Activated CD4-positive, alpha-beta T cell treated with anti-CD3 and anti-CD28 coated beads, Interleukin-2, amount 10 ng/mL, durations not matched to agents 24 days and 14 days (primary cell): ENCODE measurements at regions of chr20 and their contacts with region 1.

Region 1: DNA sequence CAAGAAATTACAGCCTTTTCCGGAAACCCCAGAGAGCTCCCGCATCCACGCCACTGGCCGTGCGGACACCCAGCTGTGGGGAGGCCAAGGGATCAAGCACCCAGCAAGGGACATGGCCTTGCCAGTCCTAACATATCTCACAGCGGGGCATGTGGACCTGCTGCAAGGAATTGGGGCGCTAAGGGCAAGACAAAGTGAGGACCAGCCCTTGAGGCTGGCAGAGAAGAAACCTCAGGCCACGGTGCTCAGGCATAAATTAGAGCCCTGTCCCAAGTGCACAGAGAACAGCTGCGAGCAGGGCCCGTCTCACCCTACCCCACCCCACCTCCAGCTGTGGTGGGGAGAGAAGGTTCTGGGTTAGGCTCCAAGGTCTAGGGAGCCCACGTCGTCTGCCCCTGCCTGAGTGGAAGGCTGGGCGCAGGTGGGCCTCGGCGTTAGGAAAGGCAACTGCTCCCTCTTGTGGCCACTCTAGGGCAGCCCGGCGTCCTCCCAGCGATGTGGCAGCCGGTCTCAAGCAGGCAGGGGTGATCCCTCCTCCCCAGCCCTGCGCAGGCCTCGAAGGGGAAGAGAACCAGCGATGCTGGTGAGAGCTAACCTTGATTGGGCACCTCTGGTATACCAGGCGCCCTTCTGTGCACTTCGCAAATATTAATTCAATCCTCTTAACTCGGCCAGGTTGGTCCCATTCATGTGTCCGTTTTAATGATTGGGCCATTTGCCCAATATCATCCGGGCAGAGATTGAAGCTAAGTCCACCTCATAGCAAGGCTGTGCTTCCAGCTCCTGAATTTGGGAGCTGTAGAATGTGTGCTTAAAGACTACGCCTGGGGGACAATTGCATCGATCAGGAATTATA is 235.8 kb downstream of the NFATC2 start:
- DNase-seq: peak; percentile 91
- H3K4me3 Mint-ChIP-seq: no peak overlapping the region
- H3K27ac Mint-ChIP-seq: no peak overlapping the region
- H3K4me1 Mint-ChIP-seq: peaks cover 2% of the 10 kb centered on the region
- H3K27me3 Mint-ChIP-seq: peaks cover 15% of the 10 kb centered on the region

Region 2: DNA sequence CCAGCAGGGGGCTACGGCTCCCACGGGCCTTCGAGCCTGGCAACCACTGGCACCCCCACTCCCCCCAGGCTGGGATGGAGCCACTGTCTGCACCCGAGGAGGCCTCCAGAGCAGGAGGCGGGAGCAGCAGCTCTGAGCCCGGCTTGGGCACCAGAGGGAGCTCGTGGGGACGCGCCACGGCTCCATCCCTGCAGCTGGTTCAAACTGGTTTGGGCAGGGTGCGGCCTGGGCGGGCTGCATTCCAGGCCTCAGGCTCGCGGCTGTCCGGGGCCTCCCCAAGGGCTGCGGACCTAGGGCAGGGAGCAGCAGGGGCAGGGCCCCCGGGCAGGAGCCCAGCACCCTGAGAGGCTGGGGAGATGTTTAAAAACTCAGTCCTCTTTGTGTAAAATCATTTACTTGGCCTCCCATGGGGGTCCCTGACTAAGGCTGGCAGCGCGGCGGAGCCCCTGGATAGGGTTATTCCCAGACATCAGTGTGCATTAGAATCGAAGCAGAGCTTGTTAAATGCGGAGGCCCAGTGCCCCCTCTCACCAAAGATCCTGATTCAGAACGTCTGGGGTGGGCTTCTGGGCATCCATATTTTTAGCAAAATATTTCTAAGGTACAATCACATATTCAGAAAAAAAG is 516.0 kb before region 1 on chr20:
- intact Hi-C with region 1: loop called (anchors 2 kb)
- DNase-seq: peak; percentile 93
- H3K4me3 Mint-ChIP-seq: no peak overlapping the region
- H3K27ac Mint-ChIP-seq: peak overlapping the region; percentile 69
- H3K4me1 Mint-ChIP-seq: peaks cover 11% of the 10 kb centered on the region
- H3K27me3 Mint-ChIP-seq: peaks cover 4% of the 10 kb centered on the region

Region 3: GRCh38 chr20:50987592-50988210 is 319.0 kb before region 1 on chr20:
- intact Hi-C with region 1: loop called (anchors 1 kb)
- DNase-seq: peak; percentile 92
- H3K4me3 Mint-ChIP-seq: no peak overlapping the region
- H3K27ac Mint-ChIP-seq: no peak overlapping the region
- H3K4me1 Mint-ChIP-seq: peaks cover 3% of the 10 kb centered on the region
- H3K27me3 Mint-ChIP-seq: peaks cover 26% of the 10 kb centered on the region

Region 4: GRCh38 chr20:51220293-51220706 is 86.4 kb before region 1 on chr20:
- intact Hi-C with region 1: loop called (anchors 2 kb)
- DNase-seq: peak; percentile 86
- H3K4me3 Mint-ChIP-seq: no peak overlapping the region
- H3K27ac Mint-ChIP-seq: no peak overlapping the region
- H3K4me1 Mint-ChIP-seq: peaks cover 5% of the 10 kb centered on the region
- H3K27me3 Mint-ChIP-seq: peaks cover 30% of the 10 kb centered on the region

Region 5: DNA sequence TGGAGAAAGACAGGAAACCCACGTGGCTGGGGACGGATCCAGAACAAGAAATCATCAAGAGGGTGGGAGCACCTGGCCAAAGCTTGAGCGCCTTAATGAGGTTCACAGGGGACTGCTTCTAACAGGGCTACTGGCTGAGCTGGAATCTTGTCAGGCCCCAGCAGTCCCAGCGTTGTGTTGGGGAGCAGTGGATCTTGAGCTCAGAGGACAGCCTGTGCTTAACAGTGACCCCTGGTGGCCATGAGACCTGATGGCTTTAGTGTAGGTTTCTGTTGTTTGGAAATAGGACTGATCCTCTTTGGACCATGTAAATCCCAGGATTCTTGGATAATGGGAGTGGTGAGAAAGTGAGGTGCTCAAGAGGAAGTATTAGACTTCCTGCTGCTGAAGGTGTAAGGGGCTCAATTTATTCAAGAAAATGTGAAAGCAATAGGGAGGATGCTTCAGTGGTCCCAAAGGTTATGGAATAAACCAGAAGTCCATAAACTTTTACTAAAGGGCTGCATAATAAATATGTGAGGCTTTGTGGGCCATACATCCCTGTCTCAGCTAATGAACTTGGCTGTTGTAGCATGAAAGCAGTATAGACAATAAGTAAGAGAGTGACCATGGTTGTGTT is 19.6 kb after region 1 on chr20:
- intact Hi-C with region 1: no loop called
- DNase-seq: no peak
- H3K4me3 Mint-ChIP-seq: no peak overlapping the region
- H3K27ac Mint-ChIP-seq: no peak overlapping the region
- H3K4me1 Mint-ChIP-seq: no peaks in the 10 kb centered on the region
- H3K27me3 Mint-ChIP-seq: no peaks in the 10 kb centered on the region

Region 6: GRCh38 chr20:51360451-51361221 is 53.9 kb after region 1 on chr20:
- intact Hi-C with region 1: no loop called
- DNase-seq: no peak
- H3K4me3 Mint-ChIP-seq: no peak overlapping the region
- H3K27ac Mint-ChIP-seq: no peak overlapping the region
- H3K4me1 Mint-ChIP-seq: peaks cover 4% of the 10 kb centered on the region
- H3K27me3 Mint-ChIP-seq: peaks cover 10% of the 10 kb centered on the region

Region 7: GRCh38 chr20:51650685-51651134 is 344.0 kb after region 1 on chr20:
- intact Hi-C with region 1: no loop called
- DNase-seq: no peak
- H3K4me3 Mint-ChIP-seq: no peak overlapping the region
- H3K27ac Mint-ChIP-seq: no peak overlapping the region
- H3K4me1 Mint-ChIP-seq: no peaks in the 10 kb centered on the region
- H3K27me3 Mint-ChIP-seq: peaks cover 4% of the 10 kb centered on the region